H1 (cell line): ENCODE measurements at regions of chr1 and their contacts with region 1.

Region 1: DNA sequence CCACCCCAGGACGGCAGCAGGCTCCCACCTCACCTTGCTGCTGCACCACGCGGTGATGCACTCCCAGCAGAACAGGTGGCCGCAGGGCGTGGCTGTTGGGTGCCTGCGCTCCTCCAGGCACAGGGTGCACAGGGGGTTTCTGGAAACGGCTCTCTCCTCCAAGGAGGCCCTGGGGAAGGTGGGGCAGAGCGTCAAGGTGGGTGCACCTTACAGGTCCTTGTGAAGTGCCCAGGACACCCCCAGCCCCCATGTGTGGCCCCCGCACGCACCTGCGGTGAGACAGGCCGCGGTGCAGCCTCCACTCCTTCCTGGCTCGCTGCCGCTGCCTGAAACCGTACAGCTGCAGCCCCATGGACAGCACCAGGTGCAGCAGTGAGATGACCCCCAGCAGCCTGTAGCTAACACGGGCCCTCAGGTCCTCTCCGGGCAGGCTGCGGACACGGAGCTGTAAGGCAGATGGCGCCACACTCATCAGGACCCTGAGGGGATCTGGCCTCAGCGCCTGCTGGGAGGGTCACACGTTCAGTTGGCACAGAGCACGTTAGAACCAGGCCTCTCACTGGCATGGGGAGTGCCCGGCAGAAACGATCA is 5.8 kb downstream of the PEX10 start:
- DNase-seq: no peak
- H3K4me3 ChIP-seq: no peak overlapping the region
- H3K27ac ChIP-seq: no peak overlapping the region
- H3K4me1 ChIP-seq: peaks cover 0 to 1% (median under 1%) of the 10 kb centered on the region in 4 experiments; a peak in 2 of 7 replicates
- H3K27me3 ChIP-seq: no peaks in the 10 kb centered on the region
- CTCF ChIP-seq: peak in 2 of 3 experiments; percentile 37 to 52; a peak in 3 of 4 replicates
- EP300 ChIP-seq: no peak
- POLR2A ChIP-seq: no peak; a peak in 1 of 3 replicates
- RAD21 ChIP-seq: peak; percentile 8 to 27; a peak in 2 of 4 replicates

Region 2: DNA sequence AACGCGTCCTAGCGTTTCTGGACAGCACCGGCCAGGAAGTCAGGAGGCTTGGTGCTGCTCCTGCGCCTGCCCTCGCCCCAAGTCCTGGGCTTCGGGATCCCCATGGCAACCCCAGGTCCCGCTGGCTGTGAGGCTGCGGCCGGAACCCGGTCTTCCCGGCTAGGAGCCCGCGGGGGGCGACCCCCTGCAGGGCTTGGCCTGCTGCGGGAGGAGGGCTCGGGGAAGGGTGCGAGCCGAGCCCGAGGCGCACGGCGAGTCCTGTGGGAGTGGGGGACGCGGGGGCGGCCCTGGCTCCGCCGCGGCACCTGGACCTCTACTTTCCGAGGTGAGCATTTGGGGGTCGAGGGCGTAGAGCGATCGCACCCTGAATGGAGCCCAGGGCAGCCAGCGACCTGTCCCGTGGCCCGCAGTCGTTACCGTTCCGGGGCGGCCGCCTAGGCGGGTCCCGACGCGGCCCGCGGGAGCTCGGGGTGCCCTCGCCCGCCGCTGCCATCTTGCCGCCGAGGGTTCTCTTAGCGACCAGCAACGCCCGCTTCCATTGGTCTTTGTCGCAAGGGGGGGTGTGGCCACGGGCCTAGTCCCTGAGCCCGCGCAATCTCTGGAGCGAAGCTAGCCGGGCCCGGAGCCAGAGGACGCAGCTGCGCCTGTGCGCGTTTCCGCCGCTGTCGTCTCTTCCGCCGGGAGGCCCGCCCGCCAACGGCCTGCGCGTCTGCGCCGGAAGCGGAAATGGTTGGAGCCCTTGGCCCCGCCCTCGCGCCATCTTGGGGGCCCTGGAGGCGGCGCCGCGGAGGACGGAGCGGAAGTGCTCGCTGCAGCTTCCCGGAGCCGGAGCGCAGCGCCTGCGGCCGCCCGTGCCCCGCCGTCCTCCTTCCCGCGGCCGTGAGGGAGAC is 15.3 kb before region 1 on chr1 and contains the starts of genes MORN1 and RER1:
- CTCF ChIA-PET with region 1: interaction called, 5 read pairs
- POLR2A ChIA-PET with region 1: interaction called, 29 read pairs
- DNase-seq: peak; percentile 88 to 97
- H3K4me3 ChIP-seq: peak within 1 kb of the TSS; percentile 79 to 92 (median 85)
- H3K27ac ChIP-seq: no peak within 1 kb of the TSS; the same call in 1 of the 2 replicates
- H3K4me1 ChIP-seq: peaks cover 0 to 9% (median 2%) of the 10 kb centered on the region in 4 experiments; a peak in 6 of 7 replicates
- H3K27me3 ChIP-seq: no peaks in the 10 kb centered on the region
- CTCF ChIP-seq: no peak
- EP300 ChIP-seq: peak in 1 of 2 experiments; percentile 76; a peak in 1 of 3 replicates
- POLR2A ChIP-seq: peak in 1 of 2 experiments; percentile 67; a peak in 2 of 3 replicates
- RAD21 ChIP-seq: no peak
- total RNA-seq, gene MORN1: 9.1 and 10.5 TPM in 2 replicates
- total RNA-seq, gene RER1: 92.0 and 102 TPM in 2 replicates

Region 3: GRCh38 chr1:2396476-2396875 is 10.1 kb before region 1 on chr1:
- CTCF ChIA-PET with region 1: interaction called, 4 read pairs
- POLR2A ChIA-PET with region 1: interaction called, 29 read pairs
- DNase-seq: no peak
- H3K4me3 ChIP-seq: no peak overlapping the region
- H3K27ac ChIP-seq: no peak overlapping the region
- H3K4me1 ChIP-seq: peaks cover 0 to 6% (median 0%) of the 10 kb centered on the region in 4 experiments; a peak in 4 of 7 replicates
- H3K27me3 ChIP-seq: no peaks in the 10 kb centered on the region
- CTCF ChIP-seq: no peak
- EP300 ChIP-seq: no peak
- POLR2A ChIP-seq: no peak
- RAD21 ChIP-seq: no peak